Mammary epithelial cell (primary cell): ENCODE measurements at regions of chr10 and their contacts with region 1.

Region 1: DNA sequence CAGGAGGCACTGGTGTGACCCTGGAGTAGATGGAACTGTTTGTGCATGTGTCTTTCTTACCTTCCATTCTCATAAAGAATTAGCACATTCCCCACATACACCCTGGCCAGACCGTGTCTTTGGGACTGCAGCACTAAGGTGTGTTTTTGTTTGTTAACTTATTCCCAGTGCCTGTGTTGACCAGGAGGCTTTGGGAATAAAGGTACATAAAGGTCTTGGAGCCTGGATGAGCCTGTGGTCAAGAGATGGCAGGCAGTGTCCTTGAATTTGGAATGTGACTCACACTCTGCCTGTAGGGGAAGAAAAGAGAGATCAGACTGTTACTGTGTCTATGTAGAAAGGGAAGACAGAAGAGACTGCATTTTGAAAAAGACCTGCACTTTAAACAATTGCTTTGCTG is 137.6 kb downstream of the LYZL1 start:
- DNase-seq: no peak
- H3K4me3 ChIP-seq: no peak overlapping the region
- H3K27ac ChIP-seq: no peak overlapping the region
- H3K4me1 ChIP-seq: no peaks in the 10 kb centered on the region
- H3K27me3 ChIP-seq: no peaks in the 10 kb centered on the region
- CTCF ChIP-seq: no peak

Region 2: GRCh38 chr10:29328983-29329382 is 97.4 kb before region 1 on chr10:
- CTCF ChIA-PET with region 1: no interaction called
- dilution Hi-C with region 1: loop called (anchors 5 kb)
- in situ Hi-C with region 1: no loop called
- intact Hi-C with region 1: no loop called
- DNase-seq: no peak
- H3K4me3 ChIP-seq: no peak overlapping the region
- H3K27ac ChIP-seq: no peak overlapping the region
- H3K4me1 ChIP-seq: no peaks in the 10 kb centered on the region
- H3K27me3 ChIP-seq: no peaks in the 10 kb centered on the region
- CTCF ChIP-seq: no peak

Region 3: GRCh38 chr10:29670761-29671160 is 244.3 kb after region 1 on chr10:
- CTCF ChIA-PET with region 1: no interaction called
- dilution Hi-C with region 1: no loop called
- in situ Hi-C with region 1: no loop called
- intact Hi-C with region 1: no loop called
- DNase-seq: no peak
- H3K4me3 ChIP-seq: no peak overlapping the region
- H3K27ac ChIP-seq: no peak overlapping the region
- H3K4me1 ChIP-seq: peaks cover 22% of the 10 kb centered on the region
- H3K27me3 ChIP-seq: no peaks in the 10 kb centered on the region
- CTCF ChIP-seq: no peak